Posterior vena cava (tissue), 2 donors: ENCODE measurements at regions of chr3 and their contacts with region 1.

Region 1: DNA sequence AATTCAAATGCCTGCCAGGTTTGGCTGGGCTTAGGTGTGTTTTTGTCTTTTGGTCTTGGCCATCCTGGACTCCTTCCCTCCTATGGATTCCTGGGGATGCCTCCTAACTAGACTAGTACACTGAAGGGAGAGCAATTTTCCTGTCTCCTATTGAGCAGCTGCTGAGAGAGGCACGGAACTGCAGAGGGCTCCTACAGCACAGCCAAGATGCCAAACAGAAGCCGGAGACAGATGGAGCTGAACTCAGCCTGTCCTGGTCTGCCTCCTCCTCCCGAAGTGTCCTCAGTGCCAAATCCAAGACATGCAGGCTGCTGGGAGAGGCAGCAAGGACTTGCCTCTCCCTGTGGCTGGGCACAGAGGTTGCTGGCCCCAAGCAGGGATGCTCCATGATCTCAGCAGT is 256.6 kb upstream of the PROK2 start:
- DNase-seq: no peak

Region 2: GRCh38 chr3:71987086-71987735 is 54.3 kb before region 1 on chr3:
- intact Hi-C with region 1: no loop called
- DNase-seq: no peak

Region 3: DNA sequence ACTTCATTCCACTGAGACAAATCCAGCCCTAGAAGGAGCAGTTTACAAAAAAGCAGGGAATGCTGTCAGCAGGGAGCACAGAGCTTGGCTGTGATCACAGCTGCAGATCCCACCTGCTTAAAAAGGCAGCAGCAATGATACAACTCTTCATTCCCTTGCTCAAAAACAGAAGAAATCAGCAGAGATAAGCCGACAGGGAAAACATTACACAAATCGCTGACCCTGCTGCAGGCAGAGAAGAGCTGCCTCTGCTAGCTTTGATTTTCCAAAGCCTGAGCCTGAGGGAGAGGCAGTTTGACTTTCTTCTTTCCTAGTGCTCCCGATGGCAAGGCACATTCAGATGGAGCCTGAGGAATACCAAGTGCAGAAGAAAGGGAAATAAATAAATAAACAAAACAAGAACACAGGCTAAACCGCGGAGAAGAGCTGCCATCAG is 726.5 kb after region 1 on chr3:
- intact Hi-C with region 1: no loop called
- DNase-seq: no peak

Region 4: GRCh38 chr3:73437828-73438227 is 1396.3 kb after region 1 on chr3:
- intact Hi-C with region 1: loop called in 1 of 2 experiments (anchors 5 kb)
- DNase-seq: no peak